ENCODE measurements at regions of chr17 and their contacts with region 1.

Region 1: GRCh38 chr17:66755101-66755904 is 79.6 kb upstream of the CACNG5 start:
- DNase-seq: no peak
- ATAC-seq: no peak
- H3K4me3 ChIP-seq: no peak overlapping the region
- H3K27ac ChIP-seq: no peak overlapping the region
- H3K4me1 ChIP-seq: no peaks in the 10 kb centered on the region
- H3K27me3 ChIP-seq: no peaks in the 10 kb centered on the region
- CTCF ChIP-seq: no peak
- POLR2A ChIP-seq: no peak

Region 2: DNA sequence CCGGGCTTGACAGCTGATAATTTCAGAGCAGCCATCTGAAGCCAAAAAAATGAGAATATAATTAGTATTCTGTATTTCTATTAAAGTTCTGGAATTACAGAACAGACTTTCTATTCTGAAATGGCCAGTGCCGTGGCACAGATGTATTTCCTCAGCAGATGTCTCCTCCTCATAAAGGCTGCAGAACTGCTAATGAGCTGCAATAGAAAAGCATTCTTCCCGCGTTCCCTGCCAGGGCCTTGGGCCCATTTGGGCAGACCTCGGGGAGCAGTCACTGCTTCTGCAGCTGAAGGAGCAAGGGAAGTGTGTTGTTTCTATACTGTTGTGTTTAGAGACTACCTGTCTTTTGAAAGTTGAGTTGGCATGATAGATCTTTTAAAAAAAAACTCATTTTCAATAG is 73.0 kb before region 1 on chr17:
- in situ Hi-C with region 1: no loop called
- intact Hi-C with region 1: no loop called
- DNase-seq: no peak
- ATAC-seq: no peak
- H3K4me3 ChIP-seq: no peak overlapping the region
- H3K27ac ChIP-seq: no peak overlapping the region
- H3K4me1 ChIP-seq: peaks cover 0 to under 1% of the 10 kb centered on the region in 2 donors
- H3K27me3 ChIP-seq: no peaks in the 10 kb centered on the region
- CTCF ChIP-seq: no peak
- POLR2A ChIP-seq: no peak

Region 3: GRCh38 chr17:66829386-66829864 is 74.1 kb after region 1 on chr17:
- in situ Hi-C with region 1: loop called in 1 of 4 experiments (anchors 10 kb)
- intact Hi-C with region 1: no loop called
- DNase-seq: no peak
- ATAC-seq: peak; percentile 42 to 53
- H3K4me3 ChIP-seq: no peak overlapping the region
- H3K27ac ChIP-seq: no peak overlapping the region
- H3K4me1 ChIP-seq: no peaks in the 10 kb centered on the region
- H3K27me3 ChIP-seq: peaks cover 7 to 17% (median 8%) of the 10 kb centered on the region in 3 donors
- CTCF ChIP-seq: no peak
- POLR2A ChIP-seq: no peak

Measured in gastrocnemius medialis (tissue), 4 donors.